Endothelial cell of umbilical vein (primary cell): ENCODE measurements at regions of chr12 and their contacts with region 1.

Region 1: GRCh38 chr12:31959161-31959700 is at the start of gene RESF1:
- DNase-seq: peak; percentile 88
- H3K4me3 ChIP-seq: peak within 1 kb of the TSS; percentile 72 to 98 (median 88)
- H3K27ac ChIP-seq: peak within 1 kb of the TSS; percentile 74
- H3K4me1 ChIP-seq: peaks cover 21% of the 10 kb centered on the region
- H3K27me3 ChIP-seq: no peaks in the 10 kb centered on the region
- CTCF ChIP-seq: no peak
- POLR2A ChIP-seq: peak; percentile 90
- total RNA-seq, gene RESF1: 62.1 and 70.0 TPM in 2 replicates

Region 2: DNA sequence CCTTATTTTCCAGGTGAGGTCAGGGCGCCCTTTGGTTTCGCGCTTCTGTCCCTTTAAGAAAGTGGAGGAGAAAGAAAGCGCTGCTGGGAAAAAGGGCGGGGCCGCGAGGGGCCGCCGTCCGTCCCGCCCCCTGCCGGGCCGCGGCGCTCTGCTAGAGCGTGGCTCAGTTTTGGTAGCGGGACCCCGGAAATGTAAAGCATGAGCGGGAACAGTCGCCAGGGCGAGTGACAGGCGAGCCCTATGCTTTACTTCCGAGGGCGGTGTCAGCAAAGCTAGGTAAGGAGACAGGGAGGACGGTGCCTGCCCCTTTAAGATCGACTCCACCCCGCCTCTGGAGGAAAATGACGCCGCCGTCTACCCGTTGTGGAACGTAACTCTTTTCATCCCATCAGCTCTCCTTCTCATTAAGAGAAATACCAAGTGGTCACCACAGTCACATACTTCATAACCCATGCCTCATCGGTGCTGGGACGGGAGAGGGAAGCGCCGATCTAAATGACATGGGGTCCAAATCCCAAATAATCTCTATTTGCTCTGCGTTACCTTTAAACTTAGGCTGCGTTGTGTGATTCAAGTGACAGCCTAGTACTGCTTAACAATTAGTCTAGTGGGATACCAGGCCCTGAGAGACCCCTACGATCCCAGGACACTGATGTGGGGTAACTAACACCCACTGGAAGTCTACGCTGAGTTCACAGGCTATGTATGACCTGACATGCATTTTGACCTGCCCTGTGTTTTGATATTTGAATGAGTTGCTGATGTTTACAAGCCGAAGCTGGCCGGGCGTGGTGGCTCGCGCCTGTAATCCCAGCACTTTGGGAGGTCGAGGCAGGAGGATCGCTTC is 299.9 kb before region 1 on chr12 and contains the start of gene ETFBKMT:
- CTCF ChIA-PET with region 1: interaction called, 13 read pairs
- POLR2A ChIA-PET with region 1: no interaction called
- dilution Hi-C with region 1: no loop called
- intact Hi-C with region 1: loop called (anchors 2 kb)
- DNase-seq: peak; percentile 89
- H3K4me3 ChIP-seq: peak within 1 kb of the TSS; percentile 75 to 87 (median 81)
- H3K27ac ChIP-seq: peak within 1 kb of the TSS; percentile 87
- H3K4me1 ChIP-seq: peaks cover 4% of the 10 kb centered on the region
- H3K27me3 ChIP-seq: no peaks in the 10 kb centered on the region
- CTCF ChIP-seq: peak; percentile 30 to 38
- POLR2A ChIP-seq: peak; percentile 86
- total RNA-seq, gene ETFBKMT: 2.4 and 3.1 TPM in 2 replicates

Region 3: GRCh38 chr12:31682136-31682962 is 276.9 kb before region 1 on chr12:
- CTCF ChIA-PET with region 1: interaction called, 19 read pairs
- POLR2A ChIA-PET with region 1: no interaction called
- dilution Hi-C with region 1: no loop called
- intact Hi-C with region 1: loop called (anchors 1 kb)
- DNase-seq: peak; percentile 87
- H3K4me3 ChIP-seq: no peak overlapping the region
- H3K27ac ChIP-seq: no peak overlapping the region
- H3K4me1 ChIP-seq: no peaks in the 10 kb centered on the region
- H3K27me3 ChIP-seq: no peaks in the 10 kb centered on the region
- CTCF ChIP-seq: peak; percentile 69 to 71
- POLR2A ChIP-seq: no peak

Region 4: DNA sequence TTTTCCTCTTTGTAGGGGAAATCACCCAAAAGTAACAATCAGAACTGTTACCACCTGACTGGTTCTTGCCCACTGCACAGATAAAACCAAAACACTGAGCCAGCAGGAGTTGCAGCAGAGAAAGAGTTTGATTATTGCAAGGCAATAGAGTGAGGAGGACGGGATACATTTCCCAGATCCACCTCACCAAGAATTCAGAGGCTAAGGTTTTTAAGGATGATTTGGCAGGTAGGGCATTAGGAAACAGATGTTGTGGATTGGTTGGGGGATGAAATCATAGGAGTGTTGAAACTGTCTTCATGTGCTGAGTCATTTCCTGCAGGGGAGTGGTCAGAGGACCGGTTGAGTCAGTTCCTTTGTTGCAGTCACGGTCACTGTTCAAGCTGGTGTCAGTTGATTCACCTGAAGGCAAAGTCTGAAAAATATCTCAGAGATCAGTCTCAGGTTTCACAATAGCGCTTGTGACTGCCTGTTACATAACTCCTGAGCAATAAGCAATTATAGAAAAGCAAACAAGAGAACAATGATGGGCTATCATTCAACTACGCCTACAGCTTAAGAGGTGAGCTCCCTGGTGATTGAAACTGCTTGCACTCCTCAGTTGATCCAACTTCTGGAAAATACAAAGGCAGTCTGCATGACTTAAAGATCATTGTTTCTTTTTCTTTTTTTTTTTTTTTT is 210.1 kb before region 1 on chr12:
- CTCF ChIA-PET with region 1: no interaction called
- POLR2A ChIA-PET with region 1: no interaction called
- dilution Hi-C with region 1: no loop called
- intact Hi-C with region 1: loop called (anchors 1 kb)
- DNase-seq: peak; percentile 98
- H3K4me3 ChIP-seq: no peak overlapping the region
- H3K27ac ChIP-seq: peak overlapping the region; percentile 93
- H3K4me1 ChIP-seq: peaks cover 42% of the 10 kb centered on the region
- H3K27me3 ChIP-seq: no peaks in the 10 kb centered on the region
- CTCF ChIP-seq: no peak
- POLR2A ChIP-seq: peak; percentile 33

Region 5: GRCh38 chr12:31813305-31813704 is 145.9 kb before region 1 on chr12:
- CTCF ChIA-PET with region 1: no interaction called
- POLR2A ChIA-PET with region 1: interaction called, 4 read pairs
- dilution Hi-C with region 1: no loop called
- intact Hi-C with region 1: loop called (anchors 10 kb)
- DNase-seq: peak; percentile 44
- H3K4me3 ChIP-seq: no peak overlapping the region
- H3K27ac ChIP-seq: no peak overlapping the region
- H3K4me1 ChIP-seq: no peaks in the 10 kb centered on the region
- H3K27me3 ChIP-seq: no peaks in the 10 kb centered on the region
- CTCF ChIP-seq: peak in 1 of 2 donors; percentile 12
- POLR2A ChIP-seq: no peak

Region 6: GRCh38 chr12:31896514-31897039 is 62.7 kb before region 1 on chr12:
- CTCF ChIA-PET with region 1: interaction called, 3 read pairs
- POLR2A ChIA-PET with region 1: no interaction called
- dilution Hi-C with region 1: no loop called
- intact Hi-C with region 1: loop called (anchors 1 kb)
- DNase-seq: peak; percentile 91
- H3K4me3 ChIP-seq: peak overlapping the region in 1 of 3 experiments; percentile 30
- H3K27ac ChIP-seq: peak overlapping the region; percentile 74
- H3K4me1 ChIP-seq: peaks cover 18% of the 10 kb centered on the region
- H3K27me3 ChIP-seq: no peaks in the 10 kb centered on the region
- CTCF ChIP-seq: no peak
- POLR2A ChIP-seq: no peak

Region 7: DNA sequence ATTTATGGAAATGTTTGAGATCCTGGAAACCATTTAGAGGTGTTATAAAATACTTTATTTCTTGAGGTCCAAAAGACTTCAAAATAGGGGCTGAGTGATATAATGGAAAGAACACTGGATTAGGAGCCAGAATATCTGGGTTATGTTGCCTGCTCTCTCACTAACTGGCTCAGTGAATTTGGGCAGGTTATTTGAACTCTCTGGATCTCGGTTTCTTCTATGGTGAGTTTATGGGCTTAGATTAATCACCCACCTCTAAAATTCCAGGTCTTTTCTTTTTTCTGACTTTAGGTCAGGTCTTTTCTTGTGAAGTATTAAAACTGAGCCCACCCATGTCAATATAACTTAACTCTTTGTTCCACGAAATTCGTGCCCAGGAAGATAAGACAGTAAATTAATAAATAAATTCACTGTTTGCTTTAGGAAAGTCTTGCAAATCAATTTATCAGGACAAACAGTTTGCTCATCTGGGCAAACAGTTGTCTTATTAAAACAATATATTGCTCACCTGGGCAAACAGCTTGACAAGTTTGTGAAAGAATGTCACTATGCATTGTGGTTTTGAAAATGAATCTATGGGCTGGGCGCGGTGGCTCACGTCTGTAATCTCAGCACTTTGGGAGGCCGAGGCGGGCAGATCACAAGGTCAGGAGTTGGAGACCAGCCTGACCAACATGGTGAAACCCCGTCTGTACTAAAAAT is 227.7 kb after region 1 on chr12:
- CTCF ChIA-PET with region 1: no interaction called
- POLR2A ChIA-PET with region 1: no interaction called
- dilution Hi-C with region 1: no loop called
- intact Hi-C with region 1: no loop called
- DNase-seq: no peak
- H3K4me3 ChIP-seq: no peak overlapping the region
- H3K27ac ChIP-seq: no peak overlapping the region
- H3K4me1 ChIP-seq: peaks cover 1% of the 10 kb centered on the region
- H3K27me3 ChIP-seq: no peaks in the 10 kb centered on the region
- CTCF ChIP-seq: no peak
- POLR2A ChIP-seq: no peak

Region 8: DNA sequence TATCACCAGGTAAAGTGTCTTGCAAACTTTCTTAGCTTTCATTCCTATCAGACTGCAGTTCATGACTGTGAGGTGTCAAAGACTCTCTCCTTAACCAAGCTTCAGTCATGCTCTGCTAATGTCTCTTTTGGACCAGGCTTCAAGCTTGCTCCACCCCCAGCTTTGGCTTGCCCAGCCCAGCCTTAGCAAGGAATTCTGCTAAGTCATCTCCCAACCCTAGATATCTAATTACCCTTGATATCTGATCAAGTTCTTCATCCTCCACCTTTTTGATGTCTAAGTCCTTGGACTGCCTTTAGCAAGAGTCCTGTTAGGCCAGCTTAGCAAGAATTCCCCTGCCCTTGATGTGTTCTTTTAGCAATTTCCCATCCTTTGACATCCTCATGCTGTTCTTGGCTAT is 331.2 kb after region 1 on chr12:
- CTCF ChIA-PET with region 1: no interaction called
- POLR2A ChIA-PET with region 1: no interaction called
- dilution Hi-C with region 1: no loop called
- intact Hi-C with region 1: no loop called
- DNase-seq: no peak
- H3K4me3 ChIP-seq: no peak overlapping the region
- H3K27ac ChIP-seq: no peak overlapping the region
- H3K4me1 ChIP-seq: no peaks in the 10 kb centered on the region
- H3K27me3 ChIP-seq: no peaks in the 10 kb centered on the region
- CTCF ChIP-seq: no peak
- POLR2A ChIP-seq: no peak